PC-3 (cell line): ENCODE measurements at regions of chr10 and their contacts with region 1.

Region 1: GRCh38 chr10:58299580-58299979 is 30.6 kb downstream of the CISD1 start:
- DNase-seq: peak; percentile 88
- ATAC-seq: peak; percentile 93
- H3K4me3 ChIP-seq: no peak overlapping the region
- H3K27ac ChIP-seq: no peak overlapping the region
- H3K4me1 ChIP-seq: no peaks in the 10 kb centered on the region
- H3K27me3 ChIP-seq: no peaks in the 10 kb centered on the region
- CTCF ChIP-seq: peak; percentile 99

Region 2: GRCh38 chr10:57494471-57494870 is 805.1 kb before region 1 on chr10:
- CTCF ChIA-PET with region 1: no interaction called
- POLR2A ChIA-PET with region 1: no interaction called
- intact Hi-C with region 1: loop called (anchors 5 kb)
- DNase-seq: no peak
- ATAC-seq: no peak
- H3K4me3 ChIP-seq: no peak overlapping the region
- H3K27ac ChIP-seq: no peak overlapping the region
- H3K4me1 ChIP-seq: no peaks in the 10 kb centered on the region
- H3K27me3 ChIP-seq: no peaks in the 10 kb centered on the region
- CTCF ChIP-seq: no peak

Region 3: DNA sequence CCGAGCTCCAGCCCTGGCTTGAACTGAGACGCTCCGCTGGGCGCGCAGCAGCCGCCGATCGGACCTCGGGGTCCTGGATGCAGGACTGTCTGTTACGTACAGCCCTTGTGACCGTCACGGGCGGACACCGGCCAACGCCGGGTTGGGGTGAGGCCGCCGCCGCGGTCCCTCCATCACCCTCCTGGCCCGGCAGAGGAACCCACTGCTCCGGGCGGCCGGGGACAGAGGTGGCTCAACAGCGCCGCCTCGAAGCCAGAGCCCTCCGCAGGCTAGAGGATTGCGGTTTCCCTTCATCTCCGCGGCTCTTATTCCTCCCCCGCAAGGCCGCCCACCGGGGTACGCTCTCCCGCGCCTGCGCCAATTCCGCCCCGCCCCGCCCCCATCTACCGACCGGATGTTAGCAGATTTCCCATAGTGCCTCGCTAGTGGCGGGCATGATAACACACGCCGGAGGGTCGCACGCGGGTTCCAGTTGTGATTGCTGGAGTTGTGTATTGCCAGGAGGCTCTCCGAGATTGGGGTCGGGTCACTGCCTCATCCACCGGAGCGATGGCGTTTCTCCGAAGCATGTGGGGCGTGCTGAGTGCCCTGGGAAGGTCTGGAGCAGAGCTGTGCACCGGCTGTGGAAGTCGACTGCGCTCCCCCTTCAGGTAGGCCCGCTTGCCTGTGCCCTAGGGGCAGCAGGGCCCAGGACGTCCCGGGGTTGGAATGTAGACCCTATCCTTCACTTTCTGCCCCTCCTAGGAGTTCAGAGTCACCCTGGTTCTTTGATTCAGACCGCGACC is 85.6 kb after region 1 on chr10 and contains the start of gene TFAM:
- CTCF ChIA-PET with region 1: interaction called, 5 read pairs
- POLR2A ChIA-PET with region 1: interaction called, 9 read pairs
- intact Hi-C with region 1: loop called (anchors 1 kb)
- DNase-seq: peak; percentile 95
- ATAC-seq: peak; percentile 87
- H3K4me3 ChIP-seq: peak within 1 kb of the TSS; percentile 87
- H3K27ac ChIP-seq: peak within 1 kb of the TSS; percentile 55
- H3K4me1 ChIP-seq: peaks cover 25% of the 10 kb centered on the region
- H3K27me3 ChIP-seq: no peaks in the 10 kb centered on the region
- CTCF ChIP-seq: peak; percentile 75
- total RNA-seq, gene TFAM: 96.8 and 121 TPM in 2 replicates

Region 4: GRCh38 chr10:58513188-58514110 is 213.9 kb after region 1 on chr10:
- CTCF ChIA-PET with region 1: no interaction called
- POLR2A ChIA-PET with region 1: no interaction called
- intact Hi-C with region 1: loop called (anchors 10 kb)
- DNase-seq: peak; percentile 71
- ATAC-seq: peak; percentile 42
- H3K4me3 ChIP-seq: peak overlapping the region; percentile 72
- H3K27ac ChIP-seq: peak overlapping the region; percentile 4; the same call in 1 of the 2 replicates
- H3K4me1 ChIP-seq: peaks cover 22% of the 10 kb centered on the region; the same call in 1 of the 2 replicates
- H3K27me3 ChIP-seq: peaks cover 46% of the 10 kb centered on the region
- CTCF ChIP-seq: no peak

Region 5: DNA sequence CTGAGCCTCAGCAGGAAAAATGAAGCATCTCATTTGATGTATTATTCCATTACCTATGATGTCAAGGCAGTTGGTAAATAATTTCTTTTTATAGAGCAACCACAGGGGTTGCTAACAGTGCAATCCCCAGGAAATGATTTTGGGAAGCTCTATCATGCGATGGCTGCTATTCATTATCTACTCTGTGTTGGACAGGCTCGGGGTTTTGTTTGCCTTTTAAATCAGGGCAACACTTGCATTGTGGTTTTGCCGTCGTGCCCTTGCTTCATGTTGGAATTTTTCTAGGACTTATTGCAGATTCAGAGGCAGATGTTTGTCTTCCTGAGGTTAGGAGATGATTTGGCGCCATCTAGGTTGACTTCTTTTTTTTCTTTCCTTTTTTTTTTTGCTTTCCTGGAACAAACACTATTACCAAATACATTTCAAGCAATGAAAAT is 341.5 kb after region 1 on chr10:
- CTCF ChIA-PET with region 1: no interaction called
- POLR2A ChIA-PET with region 1: no interaction called
- intact Hi-C with region 1: loop called (anchors 5 kb)
- DNase-seq: peak; percentile 78
- ATAC-seq: peak; percentile 89
- H3K4me3 ChIP-seq: peak overlapping the region; percentile 9; the same call in 1 of the 2 replicates
- H3K27ac ChIP-seq: peak overlapping the region; percentile 32
- H3K4me1 ChIP-seq: peaks cover 22% of the 10 kb centered on the region
- H3K27me3 ChIP-seq: peaks cover 16% of the 10 kb centered on the region
- CTCF ChIP-seq: peak; percentile 88